ENCODE measurements at regions of chr4 and their contacts with region 1.

Region 1: GRCh38 chr4:119300101-119300978 is 21.6 kb downstream of the FABP2 start:
- DNase-seq: peak; percentile 97 to 99 (median 98)
- ATAC-seq: peak; percentile 98 to 99
- H3K4me3 ChIP-seq: peak overlapping the region; percentile 80
- H3K27ac ChIP-seq: peak overlapping the region; percentile 92
- H3K4me1 ChIP-seq: peaks cover 5% of the 10 kb centered on the region
- H3K27me3 ChIP-seq: no peaks in the 10 kb centered on the region

Region 2: DNA sequence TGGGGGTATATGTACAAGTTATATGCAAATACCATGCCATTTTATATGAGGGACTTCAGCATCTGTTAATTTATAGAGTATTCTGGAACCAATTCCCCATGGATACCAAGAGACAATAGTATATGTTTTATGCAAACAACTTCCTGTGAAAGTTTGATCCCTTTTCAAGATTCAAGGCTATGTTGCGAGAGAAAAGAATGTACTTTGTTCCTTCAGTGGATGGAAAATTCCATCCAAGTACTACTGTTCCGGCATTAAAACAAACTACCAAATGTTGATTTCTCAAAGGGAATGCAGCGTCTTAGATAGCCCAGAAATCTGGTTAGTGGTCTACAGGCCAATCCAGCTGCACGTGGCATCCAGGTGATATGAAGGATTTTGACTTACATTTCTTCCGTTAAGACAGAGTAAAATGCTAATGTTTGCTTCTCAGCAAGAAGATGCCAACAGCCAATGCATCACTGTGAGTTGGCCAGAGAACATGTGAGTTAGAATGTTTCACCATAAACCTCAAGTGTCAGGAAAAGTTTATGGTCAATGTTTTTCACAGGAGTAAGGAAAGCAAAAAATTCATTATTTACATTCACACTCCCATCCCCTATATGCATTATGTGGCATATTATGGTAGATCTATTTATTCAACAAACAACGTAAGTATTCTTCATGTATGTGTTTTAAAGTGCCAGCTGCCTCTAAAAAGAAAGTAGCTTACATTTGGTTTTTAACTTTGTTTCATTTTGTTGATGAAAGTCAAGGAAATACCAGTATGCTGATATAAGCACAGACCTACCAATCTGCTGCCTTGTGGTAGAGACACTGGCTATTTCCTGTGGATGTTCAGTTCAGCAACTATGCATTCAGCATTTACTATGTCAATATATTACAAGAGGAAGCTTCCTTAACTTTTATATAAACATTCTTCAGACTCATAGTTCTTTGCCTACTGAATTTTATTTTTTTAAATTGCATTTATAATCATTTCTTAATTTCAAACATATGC is 570.8 kb before region 1 on chr4:
- intact Hi-C with region 1: loop called in 1 of 4 experiments (anchors 10 kb)
- DNase-seq: no peak
- ATAC-seq: no peak
- H3K4me3 ChIP-seq: no peak overlapping the region
- H3K27ac ChIP-seq: no peak overlapping the region
- H3K4me1 ChIP-seq: no peaks in the 10 kb centered on the region
- H3K27me3 ChIP-seq: no peaks in the 10 kb centered on the region

Region 3: GRCh38 chr4:118981839-118982381 is 318.4 kb before region 1 on chr4:
- intact Hi-C with region 1: loop called in 1 of 4 experiments (anchors 5 kb)
- DNase-seq: peak in 2 of 3 donors; percentile 41 to 55
- ATAC-seq: peak; percentile 74 to 83
- H3K4me3 ChIP-seq: no peak overlapping the region
- H3K27ac ChIP-seq: no peak overlapping the region
- H3K4me1 ChIP-seq: peaks cover 14% of the 10 kb centered on the region
- H3K27me3 ChIP-seq: no peaks in the 10 kb centered on the region

Region 4: DNA sequence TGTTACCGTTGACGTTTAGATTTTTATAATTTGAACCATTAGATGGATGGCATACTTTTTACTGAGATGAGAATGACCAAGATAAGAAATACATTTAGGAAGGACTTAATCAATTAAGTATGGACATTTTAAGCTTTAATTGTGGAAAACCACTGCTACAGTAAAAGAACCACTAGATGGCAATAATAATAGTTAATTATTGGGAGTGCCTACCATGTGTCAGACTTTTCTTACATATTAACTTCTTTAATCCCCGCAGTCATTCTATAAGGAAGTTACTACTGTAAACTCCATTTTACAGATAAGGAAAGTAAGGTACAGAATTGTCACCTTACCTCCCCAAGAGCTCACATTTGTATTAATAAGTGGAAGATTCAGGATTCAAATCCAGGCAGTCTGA is 213.2 kb before region 1 on chr4:
- intact Hi-C with region 1: no loop called
- DNase-seq: no peak
- ATAC-seq: peak in 1 of 2 donors; percentile 34
- H3K4me3 ChIP-seq: no peak overlapping the region
- H3K27ac ChIP-seq: no peak overlapping the region
- H3K4me1 ChIP-seq: peaks cover under 1% of the 10 kb centered on the region
- H3K27me3 ChIP-seq: no peaks in the 10 kb centered on the region

Region 5: GRCh38 chr4:119184128-119184527 is 116.2 kb before region 1 on chr4:
- intact Hi-C with region 1: no loop called
- DNase-seq: no peak
- ATAC-seq: peak in 1 of 2 donors; percentile 42
- H3K4me3 ChIP-seq: no peak overlapping the region
- H3K27ac ChIP-seq: no peak overlapping the region
- H3K4me1 ChIP-seq: no peaks in the 10 kb centered on the region
- H3K27me3 ChIP-seq: no peaks in the 10 kb centered on the region

Region 6: DNA sequence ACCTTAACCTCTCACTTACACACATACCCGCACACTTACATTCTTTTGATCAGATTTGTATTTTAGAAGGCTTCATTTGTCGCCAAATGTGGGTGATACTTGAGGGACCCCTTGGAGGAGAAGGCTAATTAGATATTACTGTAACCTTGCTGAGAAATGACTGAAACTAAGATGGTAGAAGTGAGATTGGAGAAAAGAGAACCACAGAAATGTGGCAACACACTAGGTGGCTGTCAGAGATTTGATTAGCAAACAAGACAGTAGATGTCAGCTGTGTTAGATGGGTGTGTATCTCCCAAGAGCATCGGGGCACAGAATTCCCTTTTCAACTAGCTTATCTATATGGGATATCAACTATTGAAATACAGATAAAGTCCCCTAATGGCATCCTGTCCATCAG is 170.9 kb after region 1 on chr4:
- intact Hi-C with region 1: loop called in 1 of 4 experiments (anchors 10 kb)
- DNase-seq: no peak
- ATAC-seq: no peak
- H3K4me3 ChIP-seq: no peak overlapping the region
- H3K27ac ChIP-seq: no peak overlapping the region
- H3K4me1 ChIP-seq: no peaks in the 10 kb centered on the region
- H3K27me3 ChIP-seq: no peaks in the 10 kb centered on the region

Measured in right cardiac atrium (tissue), 5 donors.